Activated naive CD8-positive, alpha-beta T cell treated with anti-CD3 and anti-CD28 coated beads, Interleukin-2, amount 10 ng/mL, durations not matched to agents 7 days and 5 days (primary cell): ENCODE measurements at regions of chr7 and their contacts with region 1.

Region 1: DNA sequence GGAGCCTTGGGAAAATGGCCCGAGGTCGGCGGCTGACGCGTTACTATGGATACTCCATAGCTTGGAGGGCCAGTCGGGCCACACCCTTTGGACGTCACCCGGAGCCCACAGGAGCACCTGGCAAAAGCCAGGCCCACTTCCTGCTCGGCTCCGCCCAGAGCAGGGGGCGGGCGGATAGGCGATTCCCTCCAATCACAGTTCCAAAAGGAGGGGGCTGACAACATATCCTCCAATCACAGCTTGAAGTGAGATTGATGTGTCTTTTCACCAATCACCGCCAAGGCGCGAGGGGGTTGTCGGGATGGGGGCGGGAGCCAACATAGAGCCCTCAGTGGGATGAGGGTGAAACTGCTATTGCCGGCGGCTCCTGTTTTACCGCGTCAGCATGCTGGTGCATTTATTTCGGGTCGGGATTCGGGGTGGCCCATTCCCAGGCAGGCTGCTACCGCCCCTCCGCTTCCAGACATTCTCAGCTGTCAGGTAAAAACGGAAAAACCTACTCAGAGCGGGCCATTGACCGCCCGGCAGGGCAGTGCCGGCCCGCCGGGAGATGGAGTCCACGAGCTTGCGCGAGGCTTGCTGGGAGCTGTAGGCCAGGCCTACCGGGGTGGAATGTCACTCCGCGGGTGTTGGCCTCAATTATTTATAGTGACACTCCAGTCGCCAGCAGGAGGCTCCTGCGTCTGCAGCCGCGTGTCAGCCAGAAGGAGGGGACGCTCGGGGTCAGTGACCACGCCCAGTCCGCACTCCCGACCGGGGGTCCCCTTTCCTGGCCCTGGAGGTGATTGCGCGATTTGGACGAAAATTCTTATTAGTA is at the start of gene ABCB8:
- DNase-seq: peak; percentile 94
- ATAC-seq: peak; percentile 97
- H3K4me3 Mint-ChIP-seq: peak within 1 kb of the TSS; percentile 86
- H3K27ac Mint-ChIP-seq: peak within 1 kb of the TSS; percentile 92
- H3K4me1 Mint-ChIP-seq: peaks cover 15% of the 10 kb centered on the region
- H3K27me3 Mint-ChIP-seq: no peaks in the 10 kb centered on the region
- total RNA-seq, gene ABCB8: 48.1 to 48.3 TPM

Region 2: DNA sequence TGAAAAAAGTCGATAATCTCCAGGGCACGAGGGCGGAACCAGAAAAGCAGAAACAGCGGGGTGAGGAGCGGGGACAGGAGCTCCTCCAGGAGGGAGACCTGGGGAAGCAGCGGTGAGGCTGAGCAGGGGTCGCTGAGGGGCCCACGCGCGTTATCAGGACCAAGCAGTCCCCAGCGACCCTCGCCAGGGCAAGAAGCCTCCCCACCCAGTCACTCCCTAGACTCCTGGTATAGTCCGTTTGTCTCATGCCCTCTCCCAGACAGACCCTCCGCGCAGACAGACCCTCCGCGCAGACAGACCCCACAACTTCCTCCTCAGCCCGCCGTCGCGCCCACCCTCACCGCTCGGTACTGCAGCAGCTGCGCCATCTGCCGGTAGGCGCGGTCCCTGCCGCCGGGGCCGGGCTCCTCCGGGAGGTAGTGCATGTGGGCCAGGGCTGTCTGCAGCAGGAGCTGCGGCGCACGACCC is 10.4 kb before region 1 on chr7:
- POLR2A ChIA-PET with region 1: interaction called, 26 read pairs
- DNase-seq: peak; percentile 92
- ATAC-seq: peak; percentile 54
- H3K4me3 Mint-ChIP-seq: peak overlapping the region; percentile 80
- H3K27ac Mint-ChIP-seq: peak overlapping the region; percentile 86
- H3K4me1 Mint-ChIP-seq: peaks cover 41% of the 10 kb centered on the region
- H3K27me3 Mint-ChIP-seq: peaks cover 18% of the 10 kb centered on the region

Region 3: GRCh38 chr7:151038951-151039849 is 10.9 kb after region 1 on chr7:
- POLR2A ChIA-PET with region 1: interaction called, 11 read pairs
- DNase-seq: no peak
- ATAC-seq: peak; percentile 52
- H3K4me3 Mint-ChIP-seq: no peak overlapping the region
- H3K27ac Mint-ChIP-seq: peak overlapping the region; percentile 58
- H3K4me1 Mint-ChIP-seq: peaks cover 4% of the 10 kb centered on the region
- H3K27me3 Mint-ChIP-seq: no peaks in the 10 kb centered on the region

Region 4: GRCh38 chr7:151080522-151081169 is 52.3 kb after region 1 on chr7 and contains the start of gene FASTK:
- POLR2A ChIA-PET with region 1: interaction called, 10 read pairs
- DNase-seq: peak; percentile 90
- ATAC-seq: peak; percentile 85
- H3K4me3 Mint-ChIP-seq: peak within 1 kb of the TSS; percentile 100
- H3K27ac Mint-ChIP-seq: peak within 1 kb of the TSS; percentile 83
- H3K4me1 Mint-ChIP-seq: peaks cover 30% of the 10 kb centered on the region
- H3K27me3 Mint-ChIP-seq: peaks cover 12% of the 10 kb centered on the region
- total RNA-seq, gene FASTK: 96.5 to 100 TPM